ENCODE measurements at regions of chr6 and their contacts with region 1.

Region 1: GRCh38 chr6:119110601-119111548 is 32.4 kb upstream of the FAM184A start:
- DNase-seq: peak; percentile 34
- CTCF ChIP-seq: peak; percentile 45

Region 2: DNA sequence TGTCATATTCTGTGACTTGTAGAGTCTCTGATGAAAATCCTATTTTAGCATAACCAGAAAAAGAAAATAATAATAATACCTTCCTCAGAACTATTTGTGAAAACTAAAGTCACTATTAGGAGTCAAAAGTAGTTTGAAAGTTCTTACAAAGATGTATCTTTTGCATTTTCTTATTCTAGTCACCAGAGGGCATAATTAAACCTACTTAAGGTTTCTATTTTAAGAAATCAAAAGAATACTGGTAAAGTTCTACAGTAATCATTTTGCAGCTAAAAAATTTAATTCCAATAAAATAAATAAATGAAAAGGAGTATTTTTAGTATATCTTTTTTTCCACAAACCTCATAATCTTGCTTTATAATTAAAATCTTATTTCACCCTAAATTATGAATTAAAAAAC is 147.9 kb before region 1 on chr6:
- CTCF ChIA-PET with region 1: interaction called, 23 read pairs
- POLR2A ChIA-PET with region 1: no interaction called
- DNase-seq: no peak
- CTCF ChIP-seq: peak; percentile 2

Region 3: GRCh38 chr6:118968416-118968815 is 142.5 kb before region 1 on chr6:
- CTCF ChIA-PET with region 1: interaction called, 23 read pairs
- POLR2A ChIA-PET with region 1: no interaction called
- DNase-seq: no peak
- CTCF ChIP-seq: peak; percentile 16

Region 4: GRCh38 chr6:119099391-119099790 is 11.5 kb before region 1 on chr6:
- CTCF ChIA-PET with region 1: interaction called, 11 read pairs
- POLR2A ChIA-PET with region 1: no interaction called
- DNase-seq: no peak
- CTCF ChIP-seq: no peak

Region 5: DNA sequence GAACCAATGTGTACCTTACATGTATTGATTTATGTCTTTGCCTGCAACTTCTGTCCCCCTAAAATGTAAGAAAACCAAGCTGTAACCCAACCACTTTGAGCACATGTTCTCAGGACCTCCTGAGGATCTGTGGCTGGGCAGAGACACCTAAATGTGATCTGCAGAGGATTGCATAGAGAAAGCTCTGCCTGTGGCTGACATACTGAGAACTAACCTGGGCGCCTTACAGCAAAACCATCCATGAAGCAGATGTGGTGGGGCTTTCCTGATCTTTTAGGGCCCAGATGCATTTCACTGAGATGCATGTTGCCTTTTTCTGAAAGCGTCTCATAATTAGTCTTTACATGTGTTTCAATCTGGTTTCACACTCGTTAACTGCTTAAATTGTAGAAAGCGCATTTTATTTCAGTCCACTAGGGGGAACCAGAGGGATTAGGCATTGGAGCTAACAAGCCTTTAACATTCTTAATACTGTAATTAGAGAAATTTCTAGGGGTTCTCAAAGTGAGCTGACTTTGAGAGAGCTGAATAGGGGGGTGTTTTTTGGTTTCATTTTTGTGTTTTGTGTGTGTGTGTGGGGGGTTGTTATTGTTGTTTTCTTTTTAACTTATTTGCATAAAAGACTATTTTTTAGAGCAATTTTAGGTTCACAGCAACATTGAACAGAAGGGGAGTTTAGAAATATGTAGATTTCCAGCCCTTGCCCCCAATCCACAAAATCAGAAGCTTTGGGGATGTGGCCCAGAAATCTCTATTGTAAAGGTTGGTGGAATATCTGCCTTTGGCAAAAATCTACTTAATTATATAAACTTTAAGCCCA is 18.5 kb after region 1 on chr6:
- CTCF ChIA-PET with region 1: interaction called, 18 read pairs
- POLR2A ChIA-PET with region 1: no interaction called
- DNase-seq: peak; percentile 57
- CTCF ChIP-seq: peak; percentile 78